Esophagus muscularis mucosa (tissue), 4 donors: ENCODE measurements at regions of chr16 and their contacts with region 1.

Region 1: DNA sequence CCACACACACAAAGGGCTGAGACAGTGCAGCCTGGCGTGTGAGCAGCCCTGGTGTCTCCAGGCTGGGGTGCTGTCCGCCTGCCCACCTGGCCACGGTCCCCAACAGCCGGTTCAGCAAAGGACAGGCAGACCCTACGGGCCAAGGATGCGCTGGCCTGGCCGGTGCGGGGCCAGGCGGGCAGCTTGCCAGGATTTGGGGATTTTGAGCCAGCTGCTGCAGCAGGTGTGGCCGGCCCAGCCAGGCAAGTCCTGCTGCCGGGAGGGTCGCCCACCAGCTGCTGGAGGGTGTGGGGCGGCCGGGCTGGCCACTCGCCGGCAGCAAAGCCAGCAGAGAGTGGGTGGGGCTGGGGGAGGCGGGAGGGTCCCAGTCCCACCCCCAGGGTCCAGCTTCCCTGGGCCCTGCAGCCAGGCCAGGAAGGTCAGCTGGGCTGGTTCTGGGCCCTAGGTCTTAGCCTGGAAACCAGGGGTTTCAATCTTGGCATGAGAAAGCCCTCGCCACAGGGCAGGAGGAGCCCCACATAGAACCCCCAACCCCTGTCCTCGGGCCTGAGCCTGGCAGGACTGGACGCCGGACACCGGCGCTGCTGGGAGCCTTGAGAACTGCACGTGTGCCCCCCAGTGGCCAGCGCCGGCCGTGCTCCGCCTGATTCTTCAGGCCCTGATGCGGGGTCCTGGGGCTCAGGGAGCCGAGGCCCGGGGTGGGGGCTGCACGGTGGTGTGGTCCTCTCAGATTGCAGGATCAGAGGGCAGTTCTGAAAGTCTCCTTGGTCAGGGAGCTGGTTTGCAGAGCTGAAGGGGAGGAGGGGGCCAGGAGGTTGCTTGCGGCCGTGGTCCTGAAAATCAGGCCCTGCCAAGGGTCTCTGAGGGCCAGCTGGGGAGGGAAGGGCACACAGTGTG is 17.6 kb upstream of the SSTR5 start:
- DNase-seq: no peak
- H3K4me3 ChIP-seq: no peak overlapping the region
- H3K27ac ChIP-seq: no peak overlapping the region
- H3K4me1 ChIP-seq: peaks cover 0 to 7% (median 6%) of the 10 kb centered on the region in 4 donors
- H3K27me3 ChIP-seq: peaks cover 0 to 92% (median 22%) of the 10 kb centered on the region in 4 donors
- CTCF ChIP-seq: peak; percentile 67 to 86 (median 71)
- EP300 ChIP-seq: no peak
- POLR2A ChIP-seq: no peak

Region 2: GRCh38 chr16:814974-815373 is 239.9 kb before region 1 on chr16:
- intact Hi-C with region 1: loop called (anchors 2 kb)
- DNase-seq: no peak
- H3K4me3 ChIP-seq: no peak overlapping the region
- H3K27ac ChIP-seq: no peak overlapping the region
- H3K4me1 ChIP-seq: peaks cover 6 to 21% (median 9%) of the 10 kb centered on the region in 4 donors
- H3K27me3 ChIP-seq: peaks cover 0 to 98% (median 29%) of the 10 kb centered on the region in 4 donors
- CTCF ChIP-seq: no peak
- EP300 ChIP-seq: no peak
- POLR2A ChIP-seq: no peak

Region 3: GRCh38 chr16:1105888-1106620 is 51.1 kb after region 1 on chr16:
- intact Hi-C with region 1: no loop called
- DNase-seq: no peak
- H3K4me3 ChIP-seq: no peak overlapping the region
- H3K27ac ChIP-seq: no peak overlapping the region
- H3K4me1 ChIP-seq: peaks cover 6 to 33% (median 28%) of the 10 kb centered on the region in 4 donors
- H3K27me3 ChIP-seq: peaks cover 0 to 82% (median 6%) of the 10 kb centered on the region in 4 donors
- CTCF ChIP-seq: peak; percentile 91 to 99 (median 95)
- EP300 ChIP-seq: no peak
- POLR2A ChIP-seq: no peak

Region 4: DNA sequence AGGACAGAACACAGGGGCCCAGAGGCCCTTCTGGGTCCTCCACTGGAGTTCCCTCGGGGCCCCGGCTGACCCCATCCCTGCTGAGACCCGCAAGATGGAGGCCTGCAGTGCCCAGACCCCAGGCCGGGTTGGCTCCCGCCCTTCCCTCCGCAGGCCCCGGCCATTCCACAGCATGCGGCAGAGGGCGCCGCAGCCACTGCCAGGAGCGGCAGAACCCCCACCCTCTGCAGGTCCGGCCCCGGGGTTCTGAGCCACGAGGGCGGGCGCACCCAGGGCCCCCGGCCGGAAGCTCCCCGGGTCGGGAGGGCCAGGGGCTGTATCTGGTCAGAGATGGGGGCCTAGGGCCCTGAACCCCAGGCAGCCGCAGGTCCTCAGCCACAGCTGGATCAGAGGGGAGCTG is 373.6 kb after region 1 on chr16:
- intact Hi-C with region 1: no loop called
- DNase-seq: no peak
- H3K4me3 ChIP-seq: no peak overlapping the region
- H3K27ac ChIP-seq: no peak overlapping the region
- H3K4me1 ChIP-seq: peaks cover 0 to 9% (median 7%) of the 10 kb centered on the region in 4 donors
- H3K27me3 ChIP-seq: peaks cover 0 to 41% (median 0%) of the 10 kb centered on the region in 4 donors
- CTCF ChIP-seq: peak in 2 of 3 experiments; percentile 20 to 29
- EP300 ChIP-seq: no peak
- POLR2A ChIP-seq: no peak